Activated CD4-positive, alpha-beta T cell treated with anti-CD3 and anti-CD28 coated beads, Interleukin-2, amount 10 ng/mL, durations not matched to agents 24 days and 14 days (primary cell): ENCODE measurements at regions of chr6 and their contacts with region 1.

Region 1: GRCh38 chr6:130593200-130593599 is 227.4 kb downstream of the TMEM200A start:
- DNase-seq: peak; percentile 29
- H3K4me3 Mint-ChIP-seq: no peak overlapping the region
- H3K27ac Mint-ChIP-seq: no peak overlapping the region
- H3K4me1 Mint-ChIP-seq: peaks cover 18% of the 10 kb centered on the region
- H3K27me3 Mint-ChIP-seq: no peaks in the 10 kb centered on the region

Region 2: GRCh38 chr6:130575971-130576370 is 17.2 kb before region 1 on chr6:
- intact Hi-C with region 1: loop called (anchors 2 kb)
- DNase-seq: peak; percentile 93
- H3K4me3 Mint-ChIP-seq: peak overlapping the region; percentile 75
- H3K27ac Mint-ChIP-seq: peak overlapping the region; percentile 74
- H3K4me1 Mint-ChIP-seq: peaks cover 41% of the 10 kb centered on the region
- H3K27me3 Mint-ChIP-seq: no peaks in the 10 kb centered on the region